CD4-positive, alpha-beta memory T cell (primary cell): ENCODE measurements at regions of chr13 and their contacts with region 1.

Region 1: DNA sequence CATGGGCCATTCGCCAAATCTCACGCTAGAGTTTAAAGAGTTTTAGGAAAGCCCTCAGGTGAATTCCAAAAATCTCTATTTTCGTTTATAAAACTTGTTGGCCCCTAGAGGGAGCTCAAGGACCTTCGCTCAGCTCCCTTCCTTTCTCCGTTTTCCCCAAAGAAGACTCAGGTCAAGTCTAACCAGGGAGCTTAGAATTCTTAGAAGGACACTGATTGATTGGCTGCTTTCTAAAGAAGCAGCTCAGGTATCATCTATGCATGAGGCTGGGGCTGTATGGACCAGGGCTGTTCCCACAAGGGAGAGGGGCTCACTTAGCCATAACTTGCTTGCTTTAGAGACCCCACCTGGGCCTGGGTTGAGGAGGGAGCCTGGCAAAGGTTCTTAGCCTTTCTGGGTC is 20.5 kb downstream of the DZIP1 start:
- DNase-seq: peak in 4 of 5 donors; percentile 19 to 31 (median 20)
- H3K4me3 ChIP-seq: no peak overlapping the region
- H3K4me3 Mint-ChIP-seq: no peak overlapping the region
- H3K27ac ChIP-seq: no peak overlapping the region
- H3K27ac Mint-ChIP-seq: no peak overlapping the region
- H3K4me1 ChIP-seq: no peaks in the 10 kb centered on the region
- H3K4me1 Mint-ChIP-seq: no peaks in the 10 kb centered on the region
- H3K27me3 ChIP-seq: no peaks in the 10 kb centered on the region
- H3K27me3 Mint-ChIP-seq: peaks cover 3 to 5% of the 10 kb centered on the region in 2 donors

Region 2: DNA sequence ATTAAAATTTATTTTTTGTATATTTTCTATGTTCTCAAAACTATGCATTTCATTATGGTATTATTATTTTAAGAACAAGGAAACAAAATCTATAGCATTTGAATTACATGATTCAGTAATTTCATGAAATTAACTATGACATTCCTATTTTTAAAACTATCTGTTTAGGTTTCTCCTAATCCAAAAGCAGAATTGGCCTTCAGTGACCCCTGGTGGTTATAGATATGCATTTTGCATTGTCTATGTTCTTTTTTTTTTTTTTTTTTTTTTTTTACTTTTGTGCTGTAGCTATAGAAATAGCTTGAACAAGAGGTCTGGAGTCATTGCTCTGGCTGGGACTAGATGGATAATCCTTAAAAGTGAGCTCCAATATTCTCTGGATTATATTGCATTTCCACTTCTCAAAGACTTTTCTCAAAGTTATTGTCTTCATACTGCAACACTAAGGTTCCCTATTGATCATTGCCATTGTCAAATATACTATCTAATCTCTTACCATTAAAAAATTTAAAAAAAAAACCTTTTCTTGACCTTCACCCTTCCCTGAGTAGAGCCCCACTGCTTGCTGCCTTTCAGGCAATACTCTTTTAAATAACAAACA is 37.1 kb after region 1 on chr13:
- CTCF ChIA-PET with region 1: interaction called, 12 read pairs
- POLR2A ChIA-PET with region 1: no interaction called
- intact Hi-C with region 1: loop called (anchors 1 kb)
- DNase-seq: peak in 3 of 5 donors; percentile 20 to 24 (median 21)
- H3K4me3 ChIP-seq: no peak overlapping the region
- H3K4me3 Mint-ChIP-seq: no peak overlapping the region
- H3K27ac ChIP-seq: no peak overlapping the region
- H3K27ac Mint-ChIP-seq: no peak overlapping the region
- H3K4me1 ChIP-seq: no peaks in the 10 kb centered on the region
- H3K4me1 Mint-ChIP-seq: no peaks in the 10 kb centered on the region
- H3K27me3 ChIP-seq: no peaks in the 10 kb centered on the region
- H3K27me3 Mint-ChIP-seq: peaks cover 7 to 9% of the 10 kb centered on the region in 2 donors